Heart left ventricle (tissue), 16 donors: ENCODE measurements at regions of chr18 and their contacts with region 1.

Region 1: DNA sequence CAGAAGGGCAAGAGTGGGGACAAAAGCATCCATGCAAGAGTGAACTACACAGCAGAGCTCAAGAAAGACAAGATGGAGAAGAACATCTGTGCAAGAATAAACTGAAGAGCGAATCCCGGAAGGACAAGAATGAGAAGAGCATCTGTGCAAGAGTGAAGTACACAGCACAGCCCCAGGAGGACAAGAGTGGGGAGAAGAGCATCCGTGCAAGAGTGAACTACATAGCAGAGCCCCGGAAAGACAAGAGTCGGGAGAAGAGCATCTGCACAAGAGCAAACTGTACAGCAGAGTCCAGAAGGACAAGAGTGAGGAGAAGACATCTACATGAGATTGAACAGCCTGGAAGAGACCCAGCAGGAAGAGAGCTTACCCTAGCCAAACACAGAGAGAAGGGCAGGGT is 284.6 kb downstream of the PIEZO2 start:
- DNase-seq: no peak
- ATAC-seq: no peak
- H3K4me3 ChIP-seq: no peak overlapping the region
- H3K27ac ChIP-seq: no peak overlapping the region
- H3K4me1 ChIP-seq: no peaks in the 10 kb centered on the region
- H3K27me3 ChIP-seq: peaks cover 0 to 3% (median 0%) of the 10 kb centered on the region in 9 donors
- CTCF ChIP-seq: no peak
- POLR2A ChIP-seq: no peak

Region 2: DNA sequence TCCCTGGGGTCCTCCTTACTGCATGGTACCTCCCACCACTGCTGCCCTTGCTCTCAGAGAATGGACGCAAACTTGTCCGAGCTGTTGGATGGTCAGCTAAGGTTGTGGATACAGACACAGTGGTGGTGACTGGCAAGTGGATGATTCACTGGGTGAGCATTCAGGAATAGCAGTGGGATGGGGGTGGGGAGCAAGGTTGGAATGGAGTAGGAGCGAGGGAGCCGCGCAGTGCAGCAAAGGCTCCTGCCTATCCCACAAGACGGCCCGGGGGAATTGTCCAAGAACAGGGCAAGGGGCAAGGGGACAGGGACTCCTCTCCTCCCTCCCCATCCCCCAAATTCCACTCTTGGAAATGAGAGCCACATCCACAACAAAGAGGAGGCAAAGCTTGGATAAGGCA is 182.4 kb after region 1 on chr18:
- intact Hi-C with region 1: loop called in 1 of 10 experiments (anchors 5 kb)
- DNase-seq: no peak
- ATAC-seq: no peak
- H3K4me3 ChIP-seq: no peak overlapping the region
- H3K27ac ChIP-seq: no peak overlapping the region
- H3K4me1 ChIP-seq: no peaks in the 10 kb centered on the region
- H3K27me3 ChIP-seq: peaks cover 0 to 3% (median 0%) of the 10 kb centered on the region in 9 donors
- CTCF ChIP-seq: no peak
- POLR2A ChIP-seq: no peak